PC-9 (cell line): ENCODE measurements at regions of chr2 and their contacts with region 1.

Region 1: DNA sequence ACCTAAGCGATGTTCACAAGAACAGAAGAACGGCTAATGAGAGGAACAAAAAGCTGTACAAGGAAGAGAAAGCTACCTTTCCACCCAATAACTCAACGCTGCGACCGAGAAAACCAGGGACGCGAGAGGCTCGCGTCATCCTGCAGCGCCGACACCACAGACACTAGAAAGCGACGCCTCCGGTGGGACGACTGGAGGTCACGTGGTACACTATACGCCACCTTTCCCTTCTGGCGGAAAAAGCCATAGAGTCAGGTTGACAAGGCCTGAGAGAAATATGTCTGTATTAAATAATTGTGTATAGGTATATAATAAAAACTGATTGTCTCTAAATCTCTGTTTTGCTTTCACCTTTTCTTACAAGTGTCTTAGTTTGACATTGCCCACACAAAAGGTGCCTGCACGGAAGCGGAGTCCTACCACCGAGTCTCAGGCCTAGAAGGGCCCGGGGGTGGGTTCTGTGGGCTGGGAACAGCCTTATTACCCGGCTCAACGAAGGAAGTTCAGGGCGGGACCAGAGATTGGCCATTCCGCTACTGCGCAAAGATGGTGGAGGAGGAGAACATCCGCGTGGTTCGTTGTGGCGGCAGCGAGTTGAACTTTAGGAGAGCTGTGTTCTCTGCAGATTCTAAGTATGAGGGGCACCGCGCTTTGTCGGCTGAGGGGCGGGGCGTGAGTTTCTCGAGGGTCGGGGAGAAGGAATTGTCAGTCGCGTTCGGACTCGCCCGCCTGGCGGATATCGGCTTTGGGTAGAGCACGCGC is at the start of gene WDR75:
- DNase-seq: peak; percentile 76 to 78
- H3K4me3 ChIP-seq: peak within 1 kb of the TSS; percentile 95
- H3K27ac ChIP-seq: peak within 1 kb of the TSS; percentile 73
- H3K4me1 ChIP-seq: peaks cover 15% of the 10 kb centered on the region
- H3K27me3 ChIP-seq: no peaks in the 10 kb centered on the region
- CTCF ChIP-seq: no peak
- total RNA-seq, gene WDR75: 18.5 and 27.5 TPM in 2 replicates

Region 2: GRCh38 chr2:189291460-189291859 is 149.7 kb before region 1 on chr2:
- CTCF ChIA-PET with region 1: no interaction called
- POLR2A ChIA-PET with region 1: no interaction called
- intact Hi-C with region 1: no loop called
- DNase-seq: no peak
- H3K4me3 ChIP-seq: no peak overlapping the region
- H3K27ac ChIP-seq: no peak overlapping the region
- H3K4me1 ChIP-seq: no peaks in the 10 kb centered on the region
- H3K27me3 ChIP-seq: no peaks in the 10 kb centered on the region
- CTCF ChIP-seq: no peak

Region 3: DNA sequence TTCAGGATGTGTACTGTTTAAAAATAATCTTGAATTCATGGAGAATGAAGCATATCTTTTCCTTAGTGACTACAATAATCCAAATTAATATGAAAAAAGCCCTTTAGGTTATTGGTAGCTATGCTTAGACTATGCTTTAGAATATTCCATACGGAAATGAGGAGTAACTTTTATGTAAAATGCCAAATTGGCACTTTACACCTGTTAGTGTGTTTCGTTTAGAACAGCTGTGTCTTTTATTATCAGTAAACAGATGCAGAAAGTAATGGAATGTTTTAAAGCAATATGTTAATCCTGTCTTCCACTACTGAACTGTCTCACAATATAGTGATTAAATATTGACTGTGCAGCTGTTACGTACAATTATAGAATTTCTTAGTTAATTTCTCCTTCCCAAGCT is 472.7 kb after region 1 on chr2:
- CTCF ChIA-PET with region 1: no interaction called
- POLR2A ChIA-PET with region 1: interaction called, 17 read pairs
- intact Hi-C with region 1: no loop called
- DNase-seq: no peak
- H3K4me3 ChIP-seq: no peak overlapping the region
- H3K27ac ChIP-seq: no peak overlapping the region
- H3K4me1 ChIP-seq: no peaks in the 10 kb centered on the region
- H3K27me3 ChIP-seq: no peaks in the 10 kb centered on the region
- CTCF ChIP-seq: no peak